MCF 10A (cell line): ENCODE measurements at regions of chr3 and their contacts with region 1.

Region 1: GRCh38 chr3:128170805-128171516 is 17.7 kb downstream of the EEFSEC start:
- DNase-seq: peak; percentile 64
- H3K4me3 Mint-ChIP-seq: no peak overlapping the region
- H3K27ac Mint-ChIP-seq: no peak overlapping the region
- H3K4me1 Mint-ChIP-seq: peaks cover 6% of the 10 kb centered on the region
- H3K27me3 Mint-ChIP-seq: no peaks in the 10 kb centered on the region
- CTCF ChIP-seq: peak; percentile 62

Region 2: GRCh38 chr3:128011140-128011539 is 159.8 kb before region 1 on chr3:
- CTCF ChIA-PET with region 1: no interaction called
- POLR2A ChIA-PET with region 1: no interaction called
- intact Hi-C with region 1: no loop called
- DNase-seq: peak; percentile 61
- H3K4me3 Mint-ChIP-seq: peak overlapping the region; percentile 52
- H3K27ac Mint-ChIP-seq: no peak overlapping the region
- H3K4me1 Mint-ChIP-seq: peaks cover 23% of the 10 kb centered on the region
- H3K27me3 Mint-ChIP-seq: no peaks in the 10 kb centered on the region
- CTCF ChIP-seq: peak; percentile 50

Region 3: DNA sequence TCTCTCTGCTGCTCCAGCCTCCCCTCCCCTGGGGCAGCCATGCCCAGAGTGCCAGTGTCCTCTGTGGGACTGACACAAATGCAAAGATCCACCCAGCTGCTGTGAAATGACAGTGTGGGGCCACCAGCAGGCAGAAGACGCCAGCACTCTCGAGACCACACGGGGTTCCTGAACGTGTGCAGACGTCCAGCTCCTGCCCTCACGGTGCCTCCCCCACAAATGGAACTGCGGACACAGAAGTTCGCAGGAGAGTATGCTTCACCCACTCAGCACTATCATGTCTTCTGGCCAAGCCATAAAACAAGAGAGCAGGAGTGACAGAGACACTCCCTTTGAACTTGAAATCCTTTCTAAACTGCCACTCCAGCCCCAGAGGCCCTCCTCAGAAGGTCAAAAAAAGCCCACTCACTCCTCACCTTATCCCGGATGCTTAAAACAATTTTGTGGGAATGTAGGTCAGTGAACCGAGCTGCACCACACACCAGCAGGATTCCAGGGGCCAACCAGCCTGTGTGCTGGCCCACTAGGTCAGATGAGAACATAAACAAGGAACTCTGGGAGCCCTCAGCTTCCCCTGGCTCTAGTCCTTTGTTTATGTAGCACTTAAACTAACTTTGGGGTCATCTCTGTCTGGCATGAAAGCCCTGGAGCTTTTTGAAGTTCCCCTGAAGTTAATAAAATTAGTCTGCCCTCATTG is 183.2 kb after region 1 on chr3:
- CTCF ChIA-PET with region 1: no interaction called
- POLR2A ChIA-PET with region 1: no interaction called
- intact Hi-C with region 1: no loop called
- DNase-seq: no peak
- H3K4me3 Mint-ChIP-seq: no peak overlapping the region
- H3K27ac Mint-ChIP-seq: no peak overlapping the region
- H3K4me1 Mint-ChIP-seq: no peaks in the 10 kb centered on the region
- H3K27me3 Mint-ChIP-seq: no peaks in the 10 kb centered on the region
- CTCF ChIP-seq: no peak

Region 4: DNA sequence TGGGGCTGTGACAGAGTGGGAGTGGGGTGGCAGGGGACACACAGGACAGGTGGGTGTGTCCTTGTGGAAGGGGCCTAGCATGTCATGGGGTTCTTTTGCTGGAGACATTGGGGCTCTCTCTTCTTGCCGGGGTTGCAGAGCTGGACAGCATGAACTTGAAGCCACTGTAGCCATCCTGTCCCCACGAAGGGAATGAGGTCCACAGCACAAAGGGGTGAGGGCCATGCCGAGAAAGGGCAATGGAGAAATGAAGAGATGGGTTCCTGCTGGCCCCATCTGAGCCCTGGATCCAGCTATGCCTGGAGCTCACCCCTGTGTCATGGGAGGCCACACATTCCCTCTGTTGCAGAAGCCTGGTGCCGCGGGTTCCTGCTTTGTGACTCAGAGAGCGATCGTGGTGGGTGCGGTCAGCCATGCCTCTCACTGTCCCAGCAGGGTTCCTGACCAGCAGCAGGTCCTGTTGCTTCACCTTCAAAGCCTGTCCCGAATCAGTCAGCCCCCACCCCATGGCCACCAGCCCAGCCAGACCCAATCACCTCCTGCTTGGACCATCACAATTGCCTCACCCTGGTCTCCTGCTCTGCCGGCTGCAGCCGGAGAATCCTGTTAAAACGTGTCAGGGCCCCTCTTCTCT is 245.7 kb after region 1 on chr3:
- CTCF ChIA-PET with region 1: interaction called, 4 read pairs
- POLR2A ChIA-PET with region 1: no interaction called
- intact Hi-C with region 1: loop called (anchors 10 kb)
- DNase-seq: peak; percentile 96
- H3K4me3 Mint-ChIP-seq: peak overlapping the region; percentile 48
- H3K27ac Mint-ChIP-seq: no peak overlapping the region
- H3K4me1 Mint-ChIP-seq: peaks cover 18% of the 10 kb centered on the region
- H3K27me3 Mint-ChIP-seq: peaks cover 22% of the 10 kb centered on the region
- CTCF ChIP-seq: no peak

Region 5: GRCh38 chr3:128503164-128503651 is 332.2 kb after region 1 on chr3:
- CTCF ChIA-PET with region 1: no interaction called
- POLR2A ChIA-PET with region 1: no interaction called
- intact Hi-C with region 1: loop called (anchors 5 kb)
- DNase-seq: peak; percentile 28
- H3K4me3 Mint-ChIP-seq: no peak overlapping the region
- H3K27ac Mint-ChIP-seq: no peak overlapping the region
- H3K4me1 Mint-ChIP-seq: no peaks in the 10 kb centered on the region
- H3K27me3 Mint-ChIP-seq: peaks cover 40% of the 10 kb centered on the region
- CTCF ChIP-seq: peak; percentile 15

Region 6: GRCh38 chr3:128584412-128585020 is 413.6 kb after region 1 on chr3:
- CTCF ChIA-PET with region 1: interaction called, 7 read pairs
- POLR2A ChIA-PET with region 1: no interaction called
- intact Hi-C with region 1: loop called (anchors 1 kb)
- DNase-seq: peak; percentile 85
- H3K4me3 Mint-ChIP-seq: no peak overlapping the region
- H3K27ac Mint-ChIP-seq: no peak overlapping the region
- H3K4me1 Mint-ChIP-seq: no peaks in the 10 kb centered on the region
- H3K27me3 Mint-ChIP-seq: no peaks in the 10 kb centered on the region
- CTCF ChIP-seq: peak; percentile 87

Region 7: DNA sequence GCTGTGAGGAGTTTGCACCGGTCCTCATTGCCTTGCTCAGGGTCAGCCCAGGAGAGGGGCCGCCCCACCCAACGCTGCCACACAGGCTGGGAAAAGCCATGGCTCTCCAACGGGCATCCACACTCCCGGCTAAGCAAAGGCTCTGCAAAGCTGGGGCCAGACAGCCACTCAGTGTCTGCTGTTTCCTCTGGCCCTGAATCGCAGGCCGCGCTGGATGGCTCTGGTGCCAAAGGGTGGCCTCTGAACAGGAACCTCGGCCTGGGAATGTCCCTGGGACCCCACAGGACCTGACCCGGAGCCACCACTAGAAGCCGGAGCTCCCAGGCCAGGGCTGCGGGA is 436.7 kb after region 1 on chr3:
- CTCF ChIA-PET with region 1: interaction called, 11 read pairs
- POLR2A ChIA-PET with region 1: no interaction called
- intact Hi-C with region 1: no loop called
- DNase-seq: no peak
- H3K4me3 Mint-ChIP-seq: no peak overlapping the region
- H3K27ac Mint-ChIP-seq: no peak overlapping the region
- H3K4me1 Mint-ChIP-seq: no peaks in the 10 kb centered on the region
- H3K27me3 Mint-ChIP-seq: no peaks in the 10 kb centered on the region
- CTCF ChIP-seq: no peak